ENCODE measurements at regions of chr11 and their contacts with region 1.

Region 1: DNA sequence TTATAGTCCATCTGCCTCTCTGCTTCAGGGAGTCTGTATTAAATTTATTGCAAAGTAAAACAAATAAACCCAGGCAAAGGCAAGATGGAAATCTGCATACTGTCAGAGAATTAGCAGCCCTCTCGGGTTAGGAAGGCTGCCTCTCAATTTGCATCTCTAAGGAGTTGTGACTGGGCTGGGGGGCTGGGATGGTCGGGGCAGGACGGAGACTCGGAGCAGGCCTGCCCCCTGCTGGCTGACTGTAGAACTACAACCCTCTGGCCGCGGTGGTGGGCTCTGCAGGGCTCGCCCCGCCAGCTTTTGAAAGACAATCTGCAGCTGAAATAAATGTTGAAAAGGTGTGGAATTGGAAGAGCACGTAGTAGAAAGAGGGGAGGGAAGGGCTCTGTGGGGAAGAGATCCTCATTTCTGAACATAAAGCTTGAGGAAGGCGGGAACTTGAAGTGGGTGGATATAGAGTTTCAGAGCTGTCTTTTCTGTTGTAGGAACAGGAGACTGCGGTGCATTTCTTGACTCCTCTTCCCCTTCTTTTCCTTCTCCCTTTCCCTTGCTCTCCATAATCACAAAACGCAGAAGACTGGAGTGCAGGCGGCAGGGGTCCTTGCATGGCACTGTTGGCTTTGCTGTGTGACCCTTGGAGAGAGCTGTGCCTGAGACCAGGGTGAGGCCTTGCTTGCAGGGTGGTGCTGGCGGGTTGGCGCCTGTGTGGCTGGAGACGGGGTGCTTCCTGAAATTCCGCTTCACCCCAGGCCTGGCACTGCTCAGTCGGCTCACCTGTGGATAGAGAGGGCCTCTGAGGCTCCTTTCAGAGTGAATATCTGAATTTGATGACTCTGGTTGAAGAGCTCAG is 22.6 kb upstream of the PKNOX2 start:
- DNase-seq: peak in 2 of 4 donors; percentile 46 to 87
- ATAC-seq: peak; percentile 97
- H3K4me3 ChIP-seq: no peak overlapping the region
- H3K27ac ChIP-seq: no peak overlapping the region
- H3K4me1 ChIP-seq: peaks cover 0 to 8% of the 10 kb centered on the region in 2 donors
- H3K27me3 ChIP-seq: peaks cover 0 to 21% of the 10 kb centered on the region in 2 donors
- CTCF ChIP-seq: peak; percentile 94 to 97

Region 2: GRCh38 chr11:124961972-124962609 is 179.8 kb before region 1 on chr11:
- intact Hi-C with region 1: loop called in 1 of 2 experiments (anchors 10 kb)
- DNase-seq: peak in 2 of 4 donors; percentile 49 to 77
- ATAC-seq: peak; percentile 96
- H3K4me3 ChIP-seq: no peak overlapping the region
- H3K27ac ChIP-seq: no peak overlapping the region
- H3K4me1 ChIP-seq: no peaks in the 10 kb centered on the region
- H3K27me3 ChIP-seq: no peaks in the 10 kb centered on the region
- CTCF ChIP-seq: peak; percentile 52 to 60

Region 3: DNA sequence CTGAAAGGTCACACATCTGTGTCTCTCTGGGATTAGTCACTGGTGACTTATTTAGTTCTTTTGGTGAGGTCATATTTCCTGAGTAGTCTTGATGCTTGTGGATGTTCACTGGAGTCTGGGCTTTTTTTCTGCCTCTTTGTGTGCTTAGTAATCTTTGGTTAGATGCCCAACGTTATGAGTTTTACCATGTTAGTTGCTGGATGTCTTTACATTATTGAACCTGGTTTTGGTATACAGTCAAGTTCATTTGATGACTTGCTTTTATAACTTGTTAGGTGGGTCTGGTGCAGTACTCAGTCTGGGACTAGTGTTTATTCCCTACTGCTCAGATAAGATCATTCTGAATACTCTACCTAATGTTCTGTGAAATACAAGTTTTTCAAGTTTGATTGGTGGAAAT is 105.0 kb before region 1 on chr11:
- intact Hi-C with region 1: no loop called
- DNase-seq: no peak
- ATAC-seq: no peak
- H3K4me3 ChIP-seq: no peak overlapping the region
- H3K27ac ChIP-seq: no peak overlapping the region
- H3K4me1 ChIP-seq: no peaks in the 10 kb centered on the region
- H3K27me3 ChIP-seq: no peaks in the 10 kb centered on the region
- CTCF ChIP-seq: no peak

Region 4: DNA sequence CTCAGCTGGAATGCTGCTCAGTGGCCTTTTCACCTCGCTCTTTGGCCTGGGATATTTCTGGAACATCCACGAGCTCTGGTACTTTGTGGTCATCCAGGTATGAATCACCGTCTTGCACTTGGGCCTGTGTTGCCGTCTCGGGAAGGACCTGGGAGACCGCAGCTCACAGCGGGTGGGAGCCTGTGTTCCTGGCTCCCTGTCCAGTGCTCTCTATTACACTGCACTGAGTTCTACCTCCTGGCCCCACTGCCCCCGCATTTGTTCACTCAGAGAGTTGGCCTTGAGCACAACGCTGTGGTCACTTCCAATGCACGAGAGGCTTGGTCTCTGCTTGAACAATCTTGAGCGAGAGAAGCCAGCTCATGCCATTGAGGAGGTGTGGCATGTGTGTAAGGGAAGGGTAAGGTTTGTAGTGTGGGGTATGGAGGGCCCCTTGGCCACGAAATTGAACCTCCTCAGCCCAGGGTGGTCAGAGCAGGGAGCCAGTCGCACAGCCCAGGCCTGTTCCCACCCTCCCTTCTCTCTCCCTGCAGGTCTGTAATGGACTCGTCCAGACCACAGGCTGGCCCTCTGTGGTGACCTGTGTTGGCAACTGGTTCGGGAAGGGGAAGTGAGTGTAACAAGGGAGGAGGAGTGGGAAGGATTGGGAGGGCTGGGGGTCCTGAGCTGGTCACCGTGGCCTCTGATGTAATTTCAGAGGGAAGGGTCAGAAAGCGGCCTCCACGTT is 62.6 kb before region 1 on chr11:
- intact Hi-C with region 1: no loop called
- DNase-seq: no peak
- ATAC-seq: peak; percentile 37
- H3K4me3 ChIP-seq: no peak overlapping the region
- H3K27ac ChIP-seq: no peak overlapping the region
- H3K4me1 ChIP-seq: no peaks in the 10 kb centered on the region
- H3K27me3 ChIP-seq: peaks cover 0 to 3% of the 10 kb centered on the region in 2 donors
- CTCF ChIP-seq: no peak

Region 5: GRCh38 chr11:125091247-125091876 is 50.5 kb before region 1 on chr11:
- intact Hi-C with region 1: loop called in 1 of 2 experiments (anchors 5 kb)
- DNase-seq: peak in 2 of 4 donors; percentile 70 to 85
- ATAC-seq: peak; percentile 90
- H3K4me3 ChIP-seq: no peak overlapping the region
- H3K27ac ChIP-seq: no peak overlapping the region
- H3K4me1 ChIP-seq: peaks cover 0 to 4% of the 10 kb centered on the region in 2 donors
- H3K27me3 ChIP-seq: no peaks in the 10 kb centered on the region
- CTCF ChIP-seq: peak; percentile 38 to 53